GM12878 (cell line): ENCODE measurements at regions of chr14 and their contacts with region 1.

Region 1: DNA sequence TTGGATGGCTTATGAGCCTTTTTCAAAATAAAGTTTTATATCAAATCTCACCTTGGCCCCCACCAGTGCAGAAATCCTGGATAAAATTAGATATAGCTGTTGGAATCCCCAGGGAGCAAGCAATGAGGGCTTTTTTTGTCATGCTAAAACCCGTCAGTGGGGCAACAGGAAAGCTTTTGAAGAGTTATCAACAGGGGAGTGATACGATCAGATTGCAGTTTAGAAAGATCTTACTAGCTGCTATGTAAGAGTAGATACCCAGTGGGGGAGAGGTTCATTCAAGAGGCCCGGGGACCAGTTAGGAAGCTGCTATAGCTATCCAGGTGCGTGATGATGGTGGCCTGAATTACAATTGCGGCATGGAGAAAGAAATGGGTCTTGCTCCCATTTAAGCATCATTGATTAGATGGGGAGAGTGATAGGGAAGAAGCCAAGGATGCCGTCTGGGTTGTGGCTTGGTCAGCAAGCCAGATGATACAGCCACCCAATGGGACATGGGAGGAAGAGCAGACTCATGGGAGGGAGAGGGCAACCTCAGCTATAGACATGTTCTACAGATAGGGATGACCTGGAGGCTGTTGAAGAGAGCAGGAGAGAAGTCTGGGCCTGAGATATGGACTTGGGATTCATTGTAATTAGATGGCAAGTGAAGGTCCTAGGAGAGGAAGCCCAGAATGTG is 272.4 kb downstream of the DPF3 start:
- DNase-seq: no peak
- ATAC-seq: no peak
- H3K4me3 ChIP-seq: no peak overlapping the region
- H3K27ac ChIP-seq: no peak overlapping the region
- H3K4me1 ChIP-seq: no peaks in the 10 kb centered on the region
- H3K27me3 ChIP-seq: no peaks in the 10 kb centered on the region
- CTCF ChIP-seq: no peak
- EP300 ChIP-seq: no peak
- POLR2A ChIP-seq: no peak
- RAD21 ChIP-seq: no peak

Region 2: DNA sequence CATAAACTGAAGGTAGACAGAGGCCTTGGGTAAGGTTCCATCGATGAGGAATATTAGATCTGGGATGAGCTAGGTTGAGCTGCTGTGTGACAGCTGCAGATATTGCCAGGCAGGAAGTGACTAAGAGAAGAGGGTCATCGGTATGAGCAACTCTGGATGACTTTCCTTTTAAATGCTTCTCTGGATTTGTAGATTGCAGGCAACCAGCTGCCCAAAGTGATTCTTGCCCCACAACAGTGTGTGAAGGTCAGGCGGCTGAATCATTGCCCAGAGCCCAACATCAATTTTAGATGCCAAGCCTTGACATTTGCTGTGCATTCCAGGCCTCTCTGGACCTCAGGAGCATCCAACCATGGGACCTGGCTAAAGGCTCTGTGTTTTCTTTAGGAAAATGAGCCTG is 16.5 kb after region 1 on chr14:
- CTCF ChIA-PET with region 1: interaction called, 7 read pairs
- POLR2A ChIA-PET with region 1: interaction called, 5 read pairs
- RAD21 ChIA-PET with region 1: interaction called, 3 read pairs
- SMC1A ChIA-PET with region 1: interaction called, 11 read pairs
- in situ Hi-C with region 1: no loop called
- intact Hi-C with region 1: no loop called
- DNase-seq: no peak
- ATAC-seq: no peak
- H3K4me3 ChIP-seq: no peak overlapping the region
- H3K27ac ChIP-seq: no peak overlapping the region
- H3K4me1 ChIP-seq: peaks cover 5% of the 10 kb centered on the region
- H3K27me3 ChIP-seq: peaks cover 0 to 2% of the 10 kb centered on the region in 2 experiments; a peak in 1 of 4 replicates
- CTCF ChIP-seq: no peak
- EP300 ChIP-seq: no peak
- POLR2A ChIP-seq: no peak
- RAD21 ChIP-seq: no peak

Region 3: GRCh38 chr14:72682184-72682583 is 60.7 kb after region 1 on chr14:
- CTCF ChIA-PET with region 1: no interaction called
- POLR2A ChIA-PET with region 1: no interaction called
- RAD21 ChIA-PET with region 1: no interaction called
- SMC1A ChIA-PET with region 1: no interaction called
- in situ Hi-C with region 1: no loop called
- intact Hi-C with region 1: no loop called
- DNase-seq: no peak
- ATAC-seq: no peak
- H3K4me3 ChIP-seq: no peak overlapping the region
- H3K27ac ChIP-seq: no peak overlapping the region
- H3K4me1 ChIP-seq: no peaks in the 10 kb centered on the region
- H3K27me3 ChIP-seq: no peaks in the 10 kb centered on the region; a peak in 1 of 4 replicates
- CTCF ChIP-seq: no peak
- EP300 ChIP-seq: no peak
- POLR2A ChIP-seq: no peak
- RAD21 ChIP-seq: no peak